ENCODE measurements at regions of chr14 and their contacts with region 1.

Region 1: GRCh38 chr14:22200977-22201605 is 387.9 kb downstream of the DAD1 start:
- DNase-seq: no peak
- H3K4me3 ChIP-seq: no peak overlapping the region
- H3K27ac ChIP-seq: no peak overlapping the region
- H3K27me3 ChIP-seq: no peaks in the 10 kb centered on the region
- CTCF ChIP-seq: peak; percentile 85

Region 2: DNA sequence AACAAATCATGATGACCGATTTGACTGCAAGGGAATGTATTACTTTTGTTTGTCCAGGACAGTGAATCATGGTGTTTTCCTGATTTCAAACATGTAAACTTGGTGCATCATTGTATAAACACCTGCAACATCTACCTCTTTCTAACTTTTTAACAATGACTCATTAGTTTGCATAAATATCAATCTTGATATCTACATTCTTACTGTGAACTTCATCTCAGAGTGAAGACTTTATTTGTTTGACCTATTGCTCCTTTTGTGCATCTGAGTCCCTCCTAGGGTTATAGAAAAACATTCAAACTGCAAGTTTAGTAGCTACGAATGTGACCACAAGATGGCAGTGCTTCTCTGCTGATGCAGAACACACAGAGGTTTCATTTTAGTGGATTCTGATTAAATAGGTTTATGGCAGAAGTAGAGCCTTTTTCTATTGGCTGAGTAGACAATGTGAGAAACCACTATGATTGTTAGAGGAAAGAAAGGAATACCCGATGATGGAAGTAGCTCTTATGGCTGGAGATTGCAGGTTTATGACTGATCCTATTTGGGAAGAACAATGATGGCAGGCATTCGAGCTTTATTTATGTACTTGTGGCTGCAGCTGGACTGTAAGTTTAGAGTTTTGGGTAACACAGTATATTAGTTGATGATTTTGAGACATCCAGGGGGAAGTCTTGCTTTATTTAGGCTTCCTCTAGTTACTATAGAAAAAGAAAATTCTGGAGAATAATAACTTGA is 283.2 kb before region 1 on chr14:
- CTCF ChIA-PET with region 1: no interaction called
- POLR2A ChIA-PET with region 1: no interaction called
- DNase-seq: peak; percentile 8
- H3K4me3 ChIP-seq: no peak overlapping the region
- H3K27ac ChIP-seq: no peak overlapping the region
- H3K27me3 ChIP-seq: no peaks in the 10 kb centered on the region
- CTCF ChIP-seq: peak; percentile 86

Region 3: DNA sequence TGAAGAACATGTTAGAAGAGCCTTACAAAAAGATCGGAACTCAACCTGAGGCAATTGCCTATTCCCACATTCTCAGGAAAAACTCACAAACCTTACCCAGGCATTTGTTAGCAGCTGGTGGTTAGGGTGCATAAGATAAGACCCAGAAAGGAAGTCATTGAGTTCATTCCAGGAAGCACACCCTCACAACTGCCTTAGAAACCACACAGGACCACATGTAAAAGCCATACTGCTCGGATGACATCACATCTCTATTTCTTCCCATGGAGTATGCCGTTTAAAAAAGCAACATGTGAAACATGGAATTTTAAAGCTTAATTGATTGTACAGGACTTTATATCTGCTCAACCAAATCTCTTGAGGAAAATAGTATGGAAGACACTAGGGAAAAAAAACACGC is 23.2 kb before region 1 on chr14:
- CTCF ChIA-PET with region 1: interaction called, 25 read pairs
- POLR2A ChIA-PET with region 1: no interaction called
- DNase-seq: no peak
- H3K4me3 ChIP-seq: no peak overlapping the region
- H3K27ac ChIP-seq: no peak overlapping the region
- H3K27me3 ChIP-seq: no peaks in the 10 kb centered on the region
- CTCF ChIP-seq: no peak

Region 4: DNA sequence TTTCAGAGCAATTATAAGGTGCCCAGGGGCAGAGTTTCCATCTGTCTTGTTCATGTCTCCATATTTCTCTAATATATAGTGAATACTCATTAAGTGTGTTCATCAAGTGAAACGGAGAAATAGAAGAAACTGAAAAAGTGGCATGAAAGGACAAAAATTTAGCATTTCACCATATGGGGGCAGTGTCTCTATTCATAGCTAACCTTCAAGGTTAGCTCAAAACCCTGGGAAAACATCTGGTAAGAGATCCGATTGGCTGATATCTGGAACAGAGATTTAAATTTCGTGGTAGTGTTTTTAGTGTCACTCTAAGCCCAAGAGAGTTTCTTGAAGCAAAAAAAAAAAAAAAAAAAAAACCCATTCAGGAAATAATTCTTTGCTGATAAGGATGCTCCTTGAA is 20.4 kb after region 1 on chr14:
- CTCF ChIA-PET with region 1: interaction called, 96 read pairs
- POLR2A ChIA-PET with region 1: no interaction called
- DNase-seq: no peak
- H3K4me3 ChIP-seq: no peak overlapping the region
- H3K27ac ChIP-seq: no peak overlapping the region
- H3K27me3 ChIP-seq: no peaks in the 10 kb centered on the region
- CTCF ChIP-seq: peak; percentile 59

Region 5: DNA sequence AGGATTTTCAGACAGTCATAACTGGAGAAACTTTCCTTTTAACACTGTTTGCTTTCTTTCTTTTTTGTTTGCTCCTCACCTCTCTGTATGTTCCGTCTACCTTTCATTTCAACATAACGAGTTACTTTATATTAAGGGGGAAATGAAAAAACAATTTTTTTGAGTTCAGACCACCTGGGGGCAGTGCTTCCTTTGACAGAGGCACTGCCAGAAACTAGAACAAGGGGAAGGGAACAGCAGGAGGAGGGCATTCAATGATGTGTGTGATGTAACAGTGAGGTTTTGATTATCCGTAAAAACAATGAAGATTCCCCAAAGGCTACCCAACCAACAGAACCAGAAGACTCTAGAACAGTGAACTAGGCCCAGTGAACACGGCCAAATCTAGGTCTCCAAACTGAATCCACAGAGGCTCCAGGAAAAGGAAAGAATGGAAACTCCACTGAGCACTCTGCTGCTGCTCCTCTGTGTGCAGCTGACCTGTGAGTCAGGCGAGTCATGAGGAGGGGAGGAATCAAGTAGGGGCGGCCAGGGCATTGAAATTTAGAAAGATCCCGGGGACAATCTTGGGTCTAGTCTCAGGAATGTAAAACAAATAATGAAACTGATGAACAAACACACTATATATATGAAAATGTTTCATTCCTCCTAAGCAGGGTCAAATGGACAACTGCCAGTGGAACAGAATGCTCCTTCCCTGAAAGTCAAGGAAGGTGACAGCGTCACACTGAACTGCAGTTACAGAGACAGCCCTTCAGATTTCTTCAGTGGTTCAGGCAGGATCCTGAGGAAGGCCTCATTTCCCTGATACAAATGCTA is 64.4 kb after region 1 on chr14:
- CTCF ChIA-PET with region 1: interaction called, 12 read pairs
- POLR2A ChIA-PET with region 1: no interaction called
- DNase-seq: no peak
- H3K4me3 ChIP-seq: no peak overlapping the region
- H3K27ac ChIP-seq: peak overlapping the region; percentile 59
- H3K27me3 ChIP-seq: no peaks in the 10 kb centered on the region
- CTCF ChIP-seq: peak; percentile 51

Region 6: DNA sequence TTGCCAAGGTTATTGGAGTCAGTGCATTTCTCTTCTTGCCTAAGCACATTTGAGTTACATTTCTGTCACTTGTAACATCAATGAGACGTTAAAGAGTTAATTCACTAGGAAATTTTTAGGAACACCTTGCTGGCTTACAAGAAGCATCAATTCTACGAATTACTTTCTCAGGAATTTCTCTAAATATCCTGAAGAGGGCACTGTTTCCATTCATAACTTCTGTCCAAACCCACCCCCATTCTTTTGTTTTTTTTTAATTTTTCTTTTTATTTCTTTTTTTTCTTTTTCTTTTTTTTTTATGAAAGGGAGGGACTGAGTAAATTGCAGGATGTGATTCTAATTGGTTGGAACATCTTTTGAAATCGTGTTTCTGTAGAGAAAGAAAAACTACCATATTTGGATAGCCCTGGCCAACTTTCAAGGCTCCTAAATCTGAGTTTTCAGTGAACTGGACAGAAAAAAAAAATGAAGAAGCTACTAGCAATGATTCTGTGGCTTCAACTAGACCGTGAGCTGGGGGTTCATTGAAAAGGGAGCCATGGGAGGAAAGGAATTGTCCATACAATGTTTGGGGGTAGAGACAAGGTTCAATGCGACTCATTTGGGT is 102.6 kb after region 1 on chr14:
- CTCF ChIA-PET with region 1: interaction called, 24 read pairs
- POLR2A ChIA-PET with region 1: no interaction called
- DNase-seq: no peak
- H3K4me3 ChIP-seq: no peak overlapping the region
- H3K27ac ChIP-seq: no peak overlapping the region
- H3K27me3 ChIP-seq: no peaks in the 10 kb centered on the region
- CTCF ChIP-seq: peak; percentile 59

Region 7: GRCh38 chr14:22370084-22370847 is 169.2 kb after region 1 on chr14:
- CTCF ChIA-PET with region 1: interaction called, 42 read pairs
- POLR2A ChIA-PET with region 1: no interaction called
- DNase-seq: no peak
- H3K4me3 ChIP-seq: no peak overlapping the region
- H3K27ac ChIP-seq: no peak overlapping the region
- H3K27me3 ChIP-seq: peaks cover 12% of the 10 kb centered on the region
- CTCF ChIP-seq: no peak

Measured in AG04450 (cell line).